Activated CD4-positive, alpha-beta T cell treated with anti-CD3 and anti-CD28 coated beads, Interleukin-2, amount 10 ng/mL, durations not matched to agents 7 days and 5 days (primary cell): ENCODE measurements at regions of chr6 and their contacts with region 1.

Region 1: GRCh38 chr6:158853072-158853871 is 34.1 kb upstream of the EZR start:
- DNase-seq: peak; percentile 93
- H3K4me3 Mint-ChIP-seq: no peak overlapping the region
- H3K27ac Mint-ChIP-seq: no peak overlapping the region
- H3K4me1 Mint-ChIP-seq: peaks cover 33% of the 10 kb centered on the region
- H3K27me3 Mint-ChIP-seq: no peaks in the 10 kb centered on the region

Region 2: DNA sequence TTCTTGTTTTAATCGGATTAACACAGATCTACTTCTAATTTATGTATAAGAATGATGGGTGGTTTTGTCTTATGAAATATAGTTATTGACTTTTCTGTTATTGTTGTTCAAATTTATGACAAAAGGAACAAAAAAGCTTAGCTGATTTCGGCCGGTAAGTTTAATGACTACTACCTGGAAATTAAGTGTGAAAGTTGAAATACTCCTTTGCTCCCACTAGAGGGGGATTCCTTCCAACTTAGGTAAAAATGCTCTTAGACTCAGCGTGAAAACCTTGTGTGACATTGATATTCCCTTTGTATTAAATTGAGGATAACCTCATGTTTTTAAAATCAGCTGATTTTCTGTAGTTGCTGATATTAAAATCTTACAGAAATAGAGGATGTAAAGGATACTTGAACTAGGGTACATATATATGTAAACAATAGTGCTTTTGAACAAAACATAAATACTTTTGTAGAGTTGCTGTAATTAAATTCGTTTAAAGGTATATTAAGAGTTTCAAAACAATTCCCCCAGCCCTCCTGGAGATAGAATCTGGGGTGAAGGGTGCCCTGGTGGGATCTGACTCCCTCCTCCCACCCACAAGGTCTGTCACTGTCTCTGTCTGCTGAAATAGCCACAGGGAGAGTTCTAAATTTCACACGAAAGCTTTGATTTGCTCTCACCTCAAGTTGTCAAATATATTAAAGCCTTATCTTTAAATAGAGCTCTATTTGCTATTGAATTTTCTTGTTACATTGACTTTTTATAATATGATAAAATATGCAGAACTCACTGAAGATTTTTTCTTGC is 1818.6 kb before region 1 on chr6:
- CTCF ChIA-PET with region 1: no interaction called
- POLR2A ChIA-PET with region 1: no interaction called
- DNase-seq: no peak
- H3K4me3 Mint-ChIP-seq: peak overlapping the region; percentile 40
- H3K27ac Mint-ChIP-seq: peak overlapping the region; percentile 3
- H3K4me1 Mint-ChIP-seq: peaks cover 23% of the 10 kb centered on the region
- H3K27me3 Mint-ChIP-seq: no peaks in the 10 kb centered on the region

Region 3: GRCh38 chr6:158554611-158555361 is 298.5 kb before region 1 on chr6:
- CTCF ChIA-PET with region 1: no interaction called
- POLR2A ChIA-PET with region 1: no interaction called
- DNase-seq: no peak
- H3K4me3 Mint-ChIP-seq: no peak overlapping the region
- H3K27ac Mint-ChIP-seq: no peak overlapping the region
- H3K4me1 Mint-ChIP-seq: peaks cover 17% of the 10 kb centered on the region
- H3K27me3 Mint-ChIP-seq: peaks cover 22% of the 10 kb centered on the region

Region 4: DNA sequence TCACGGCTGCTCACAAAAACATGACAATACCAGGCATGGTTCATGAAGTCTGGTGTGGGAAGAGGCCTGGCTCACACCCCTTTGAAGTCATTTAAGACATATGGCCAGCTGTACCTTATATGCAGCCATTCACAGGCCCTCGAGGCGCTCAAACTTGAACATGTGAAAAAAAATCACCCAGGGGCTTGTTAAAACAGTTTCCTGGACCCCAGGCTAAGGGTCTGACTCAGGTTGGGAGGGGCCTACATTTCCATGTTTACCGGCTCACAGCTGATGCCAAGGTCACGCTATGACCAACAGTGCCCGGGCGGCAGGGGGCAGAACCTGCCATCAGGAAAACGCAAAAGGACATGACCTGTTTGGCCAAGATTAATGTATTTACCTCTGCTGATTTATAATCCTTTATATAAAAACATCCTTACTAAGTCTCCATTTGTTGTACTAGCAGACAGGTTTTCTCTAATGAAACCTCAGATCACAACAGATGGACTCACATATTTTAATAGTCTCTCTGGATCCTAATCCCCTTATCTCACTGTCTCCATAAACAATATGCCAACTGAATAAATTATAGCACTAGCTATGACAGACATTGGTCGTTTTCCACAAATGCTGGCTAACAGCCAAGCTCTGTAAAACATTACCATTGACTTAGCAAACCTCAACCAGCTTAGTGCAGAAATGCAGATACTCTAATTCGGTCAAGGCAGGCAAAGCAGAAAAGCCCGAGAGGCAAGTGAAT is 54.0 kb before region 1 on chr6:
- CTCF ChIA-PET with region 1: no interaction called
- POLR2A ChIA-PET with region 1: no interaction called
- DNase-seq: no peak
- H3K4me3 Mint-ChIP-seq: no peak overlapping the region
- H3K27ac Mint-ChIP-seq: peak overlapping the region; percentile 25
- H3K4me1 Mint-ChIP-seq: peaks cover 83% of the 10 kb centered on the region
- H3K27me3 Mint-ChIP-seq: no peaks in the 10 kb centered on the region

Region 5: GRCh38 chr6:158869826-158870648 is 16.8 kb after region 1 on chr6:
- CTCF ChIA-PET with region 1: interaction called, 48 read pairs
- POLR2A ChIA-PET with region 1: interaction called, 10 read pairs
- DNase-seq: peak; percentile 94
- H3K4me3 Mint-ChIP-seq: peak overlapping the region; percentile 80
- H3K27ac Mint-ChIP-seq: peak overlapping the region; percentile 99
- H3K4me1 Mint-ChIP-seq: peaks cover 39% of the 10 kb centered on the region
- H3K27me3 Mint-ChIP-seq: peaks cover 12% of the 10 kb centered on the region